Naive thymus-derived CD4-positive, alpha-beta T cell (primary cell): ENCODE measurements at regions of chr15 and their contacts with region 1.

Region 1: GRCh38 chr15:77409259-77410156 is 10.4 kb downstream of the PEAK1 start:
- DNase-seq: peak in 7 of 9 donors; percentile 29 to 68 (median 51)
- ATAC-seq: peak; percentile 84
- H3K4me3 ChIP-seq: no peak overlapping the region
- H3K4me3 Mint-ChIP-seq: peak overlapping the region; percentile 38 to 91 (median 78)
- H3K27ac ChIP-seq: no peak overlapping the region
- H3K27ac Mint-ChIP-seq: peak overlapping the region; percentile 2 to 88 (median 78)
- H3K4me1 ChIP-seq: peaks cover 9 to 12% of the 10 kb centered on the region in 2 donors
- H3K4me1 Mint-ChIP-seq: peaks cover 11 to 49% (median 31%) of the 10 kb centered on the region in 7 donors
- H3K27me3 ChIP-seq: no peaks in the 10 kb centered on the region
- H3K27me3 Mint-ChIP-seq: no peaks in the 10 kb centered on the region

Region 2: GRCh38 chr15:77455696-77456321 is 46.3 kb after region 1 on chr15:
- CTCF ChIA-PET with region 1: no interaction called
- POLR2A ChIA-PET with region 1: no interaction called
- intact Hi-C with region 1: loop called in 1 of 2 experiments (anchors 10 kb)
- DNase-seq: no peak
- ATAC-seq: no peak
- H3K4me3 ChIP-seq: no peak overlapping the region
- H3K4me3 Mint-ChIP-seq: peak overlapping the region in 1 of 10 donors; percentile 24
- H3K27ac ChIP-seq: no peak overlapping the region
- H3K27ac Mint-ChIP-seq: peak overlapping the region in 2 of 9 donors; percentile 4 to 28
- H3K4me1 ChIP-seq: peaks cover 11 to 25% of the 10 kb centered on the region in 2 donors
- H3K4me1 Mint-ChIP-seq: peaks cover 22 to 65% (median 54%) of the 10 kb centered on the region in 7 donors
- H3K27me3 ChIP-seq: no peaks in the 10 kb centered on the region
- H3K27me3 Mint-ChIP-seq: no peaks in the 10 kb centered on the region